Ascending aorta (tissue), 2 donors: ENCODE measurements at regions of chr14 and their contacts with region 1.

Region 1: GRCh38 chr14:95507701-95508103 is 8.7 kb downstream of the SYNE3 start:
- DNase-seq: peak in 1 of 2 donors; percentile 88
- H3K4me3 ChIP-seq: peak overlapping the region in 1 of 2 donors; percentile 1
- H3K27ac ChIP-seq: peak overlapping the region; percentile 84 to 88
- H3K4me1 ChIP-seq: peaks cover 15 to 44% of the 10 kb centered on the region in 2 donors
- H3K27me3 ChIP-seq: no peaks in the 10 kb centered on the region
- CTCF ChIP-seq: no peak

Region 2: GRCh38 chr14:95483309-95484165 is 24.2 kb before region 1 on chr14:
- intact Hi-C with region 1: loop called (anchors 2 kb)
- DNase-seq: peak; percentile 64 to 94
- H3K4me3 ChIP-seq: no peak overlapping the region
- H3K27ac ChIP-seq: peak overlapping the region; percentile 78 to 82
- H3K4me1 ChIP-seq: peaks cover 6 to 24% of the 10 kb centered on the region in 2 donors
- H3K27me3 ChIP-seq: no peaks in the 10 kb centered on the region
- CTCF ChIP-seq: no peak

Region 3: DNA sequence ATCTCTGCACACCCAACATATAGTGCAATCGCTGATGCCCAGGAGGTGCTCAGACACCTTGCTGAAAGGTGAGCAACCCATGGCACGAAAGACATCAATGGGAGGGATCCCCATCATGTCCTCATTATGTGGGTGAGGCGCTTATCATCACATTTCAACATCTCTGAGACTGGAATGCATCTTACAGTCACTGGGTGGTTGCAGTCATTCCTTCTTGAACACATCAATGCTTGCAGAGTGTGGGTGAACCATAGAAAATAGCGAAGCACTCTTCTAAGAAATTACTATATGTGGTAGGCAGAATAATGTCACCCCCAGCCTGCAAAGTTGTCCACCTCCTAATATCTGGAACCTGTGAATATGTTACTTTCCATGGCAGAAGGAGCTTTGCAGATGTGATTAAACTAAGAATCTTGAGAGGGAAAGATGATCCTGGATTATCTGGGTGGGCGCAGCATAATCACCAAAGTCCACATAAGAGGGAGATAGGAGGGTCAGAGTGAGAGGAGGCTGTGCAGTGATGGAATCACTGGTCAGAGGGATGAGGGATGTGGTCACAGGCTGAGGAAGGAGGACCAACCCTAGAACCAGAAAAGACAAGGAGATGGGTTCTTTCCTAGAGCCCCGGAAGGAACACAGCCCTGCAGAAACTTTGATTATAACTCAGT is 78.4 kb after region 1 on chr14:
- intact Hi-C with region 1: no loop called
- DNase-seq: no peak
- H3K4me3 ChIP-seq: no peak overlapping the region
- H3K27ac ChIP-seq: no peak overlapping the region
- H3K4me1 ChIP-seq: no peaks in the 10 kb centered on the region
- H3K27me3 ChIP-seq: no peaks in the 10 kb centered on the region
- CTCF ChIP-seq: no peak